ENCODE measurements at regions of chr20 and their contacts with region 1.

Region 1: DNA sequence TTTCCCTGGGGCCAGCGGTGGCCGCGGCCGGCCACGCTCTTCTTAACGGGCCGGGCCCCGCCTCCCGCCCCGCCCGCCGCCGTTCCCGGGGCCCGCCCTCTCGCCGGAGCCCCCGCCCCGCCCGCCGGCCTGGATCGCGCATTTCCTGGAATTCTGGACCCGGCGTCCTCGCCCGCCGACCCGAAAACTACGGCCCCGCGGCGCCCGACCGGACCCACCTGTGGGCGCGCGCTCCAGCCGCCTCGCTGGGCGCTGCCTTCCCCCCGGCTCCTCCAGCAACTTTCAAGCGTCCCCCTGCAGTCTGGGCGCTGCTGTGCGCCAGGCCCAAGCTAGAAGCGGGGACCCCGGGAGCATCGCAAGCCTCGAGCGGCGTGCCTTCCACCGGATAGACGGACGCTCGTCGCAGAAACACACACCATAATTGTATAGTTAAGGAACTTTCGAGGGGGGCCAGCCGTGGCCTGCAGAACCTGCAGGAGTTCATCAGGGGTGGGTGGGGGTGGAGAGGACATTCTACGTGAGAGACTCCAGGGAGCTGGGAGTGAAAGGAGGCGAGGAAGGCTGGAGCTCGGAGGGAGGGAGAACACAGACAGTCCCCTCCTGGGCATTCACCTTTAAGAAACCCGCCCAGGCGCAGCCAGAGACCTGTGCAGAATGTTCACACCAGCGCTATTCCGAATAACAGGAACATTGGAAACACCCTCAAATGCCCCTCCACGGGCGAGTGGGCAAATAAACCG is at the start of gene ADA:
- DNase-seq: no peak
- ATAC-seq: peak; percentile 66
- H3K4me3 ChIP-seq: peak within 1 kb of the TSS; percentile 95
- H3K27ac ChIP-seq: peak within 1 kb of the TSS; percentile 84
- H3K4me1 ChIP-seq: peaks cover 39% of the 10 kb centered on the region
- H3K27me3 ChIP-seq: no peaks in the 10 kb centered on the region
- CTCF ChIP-seq: peak in 1 of 3 experiments; percentile 16; a peak in 1 of 6 replicates
- EP300 ChIP-seq: no peak
- POLR2A ChIP-seq: peak; percentile 50; the same call in 1 of the 2 replicates
- RAD21 ChIP-seq: no peak
- polyA plus RNA-seq, gene ADA: 40.9 to 70.6 TPM

Region 2: DNA sequence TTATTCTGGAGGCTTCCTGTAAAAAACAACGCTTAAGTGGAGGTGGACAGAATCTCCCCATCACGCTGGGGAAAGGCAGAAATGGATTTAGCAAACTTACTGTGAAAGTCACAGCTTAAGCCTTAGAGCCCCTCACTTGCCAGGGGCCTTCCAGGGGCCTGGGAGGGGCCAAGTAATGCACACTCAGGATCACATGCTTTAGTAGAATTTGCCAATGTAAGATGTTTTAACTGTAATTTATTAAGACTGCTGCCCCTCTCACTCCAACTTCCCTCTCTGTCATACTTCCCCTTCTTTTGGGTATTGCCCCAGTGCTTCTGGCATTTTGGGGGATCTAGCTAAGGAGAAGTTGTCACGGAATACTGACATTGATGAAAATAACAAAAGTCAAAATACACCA is 12.3 kb after region 1 on chr20:
- CTCF ChIA-PET with region 1: interaction called, 4 read pairs
- POLR2A ChIA-PET with region 1: interaction called, 4 read pairs
- RAD21 ChIA-PET with region 1: interaction called, 3 read pairs
- SMC1A ChIA-PET with region 1: interaction called, 11 read pairs
- in situ Hi-C with region 1: no loop called
- intact Hi-C with region 1: no loop called
- DNase-seq: no peak
- ATAC-seq: no peak
- H3K4me3 ChIP-seq: no peak overlapping the region
- H3K27ac ChIP-seq: no peak overlapping the region
- H3K4me1 ChIP-seq: no peaks in the 10 kb centered on the region; the same call in 1 of the 2 replicates
- H3K27me3 ChIP-seq: no peaks in the 10 kb centered on the region
- CTCF ChIP-seq: no peak
- EP300 ChIP-seq: no peak
- POLR2A ChIP-seq: no peak
- RAD21 ChIP-seq: no peak